ENCODE measurements at regions of chr1 and their contacts with region 1.

Region 1: DNA sequence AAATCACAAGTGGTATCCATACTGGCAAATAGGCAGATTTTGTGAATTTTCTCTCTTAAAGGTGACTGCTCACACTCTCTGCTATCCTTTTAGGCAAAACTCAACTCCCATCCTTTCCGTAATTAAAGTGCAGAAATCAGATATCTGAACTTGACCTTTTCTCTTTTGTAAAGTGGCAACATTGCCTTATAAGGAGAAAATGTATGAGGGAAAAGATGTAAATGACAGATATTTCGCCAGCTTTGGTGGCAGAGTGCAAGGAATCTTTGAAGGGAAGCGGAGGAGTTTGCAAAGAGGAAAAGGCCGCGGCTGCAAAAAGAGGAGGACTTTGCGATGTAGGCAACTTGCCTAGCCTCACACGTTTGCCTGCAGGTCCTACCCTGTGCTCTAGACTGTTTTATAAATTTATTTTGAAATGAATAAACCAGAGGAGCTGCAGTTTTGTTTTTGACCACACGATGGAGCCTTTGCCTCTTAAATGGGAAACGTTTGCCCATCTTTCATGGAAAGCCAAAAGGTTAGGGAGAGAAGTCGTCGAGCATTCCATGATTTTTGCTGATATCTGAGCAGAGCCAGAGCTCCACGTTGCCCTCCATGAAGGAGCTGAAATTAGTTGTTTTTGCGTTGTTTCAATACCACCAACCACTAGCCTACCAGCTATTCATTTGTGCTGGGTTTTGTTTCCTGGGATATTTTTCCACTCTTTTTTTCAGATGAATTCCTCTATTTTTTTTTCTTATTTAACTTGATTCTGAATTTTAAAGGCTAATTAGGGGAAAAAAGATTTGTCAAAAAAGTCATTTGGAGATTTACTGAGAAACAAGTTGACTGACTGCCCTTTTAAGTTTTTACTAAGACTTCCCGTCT is 242.3 kb downstream of the LMX1A start:
- DNase-seq: peak; percentile 35
- ATAC-seq: peak; percentile 67
- H3K4me3 ChIP-seq: no peak overlapping the region
- H3K27ac ChIP-seq: no peak overlapping the region
- H3K4me1 ChIP-seq: no peaks in the 10 kb centered on the region
- H3K27me3 ChIP-seq: 0 out of 5 replicates have a peak, but pooled peaks cover 0 to 10% of the 10 kb centered on the region in 2 experiments
- CTCF ChIP-seq: peak; percentile 64
- EP300 ChIP-seq: no peak
- POLR2A ChIP-seq: no peak
- RAD21 ChIP-seq: peak; percentile 43; the same call in 1 of the 2 replicates

Region 2: DNA sequence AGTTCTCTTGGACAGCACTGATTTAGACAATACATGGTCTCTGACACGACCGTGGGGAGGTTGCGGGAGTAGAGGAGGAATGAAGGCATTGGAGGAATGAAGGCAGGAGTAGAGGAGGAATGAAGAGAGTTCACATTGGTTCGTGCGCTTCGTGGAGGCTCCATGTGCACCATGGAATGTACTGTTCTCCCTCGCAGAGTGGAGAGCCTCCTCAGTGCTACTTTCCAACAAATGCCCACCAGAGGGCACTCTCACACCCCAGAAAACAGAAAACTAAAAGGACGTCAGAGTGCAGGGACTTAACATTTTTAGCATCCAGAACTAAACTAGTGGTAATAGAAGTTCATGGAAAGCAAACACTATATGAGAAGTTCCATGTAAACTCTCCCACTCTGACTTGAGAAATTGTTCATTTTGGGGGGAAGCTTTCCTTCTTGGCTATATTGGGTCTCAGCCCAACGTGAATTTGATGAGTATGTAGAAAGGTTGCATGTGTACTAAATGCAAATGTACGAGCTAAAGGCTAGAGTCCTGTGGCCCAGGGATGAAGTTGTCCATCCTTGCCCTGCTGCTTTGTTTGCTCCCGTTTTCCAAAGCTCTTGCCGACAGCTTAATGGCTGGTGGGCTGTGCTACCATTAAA is 30.6 kb after region 1 on chr1:
- CTCF ChIA-PET with region 1: interaction called, 4 read pairs
- POLR2A ChIA-PET with region 1: no interaction called
- in situ Hi-C with region 1: no loop called
- intact Hi-C with region 1: loop called (anchors 1 kb)
- DNase-seq: peak; percentile 44
- ATAC-seq: peak; percentile 95
- H3K4me3 ChIP-seq: no peak overlapping the region
- H3K27ac ChIP-seq: no peak overlapping the region
- H3K4me1 ChIP-seq: peaks cover 9% of the 10 kb centered on the region
- H3K27me3 ChIP-seq: no peaks in the 10 kb centered on the region
- CTCF ChIP-seq: peak; percentile 85
- EP300 ChIP-seq: no peak
- POLR2A ChIP-seq: no peak
- RAD21 ChIP-seq: 0 out of 2 replicates have a peak, but pooled peaks have one; percentile 21

Measured in HepG2 (cell line).